ENCODE measurements at regions of chr6 and their contacts with region 1.

Region 1: DNA sequence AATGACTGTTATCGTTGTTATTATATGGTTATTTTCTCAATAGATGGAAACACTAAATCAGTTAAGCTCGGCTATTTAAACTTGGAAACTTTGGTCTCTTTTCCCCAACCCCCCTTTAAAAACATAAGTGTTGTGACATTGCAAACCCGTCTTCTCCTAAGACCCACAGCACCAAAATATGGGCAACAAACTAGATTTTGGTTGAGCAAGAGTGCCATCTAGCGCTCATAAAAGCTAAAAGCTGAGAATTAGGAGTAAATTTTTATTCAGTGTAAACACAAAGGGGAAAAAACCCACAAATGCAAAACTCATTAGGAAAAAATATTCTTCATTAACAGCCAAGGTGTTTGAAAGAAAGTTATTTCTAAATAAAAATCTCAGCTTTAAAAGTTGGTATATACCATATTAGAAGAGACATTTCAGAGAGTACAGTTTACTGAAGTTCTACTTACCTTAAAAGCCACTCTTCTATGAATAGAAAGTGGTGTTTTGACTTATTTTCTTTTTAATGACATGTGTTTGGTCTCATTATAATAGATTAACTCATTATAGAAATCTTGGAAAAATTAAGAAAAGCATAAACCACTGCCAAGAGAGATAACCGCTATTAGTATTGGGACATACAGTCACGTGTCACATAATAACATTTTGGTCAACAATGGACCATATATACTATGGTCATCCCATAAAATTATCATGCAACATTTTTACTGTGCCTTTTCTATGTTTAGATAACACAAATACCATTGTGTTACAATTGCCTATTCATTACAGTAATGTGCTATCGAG is 21.1 kb downstream of the SESN1 start:
- DNase-seq: no peak
- H3K4me3 ChIP-seq: no peak overlapping the region
- H3K27ac ChIP-seq: no peak overlapping the region
- H3K4me1 ChIP-seq: peaks cover 41% of the 10 kb centered on the region
- H3K27me3 ChIP-seq: no peaks in the 10 kb centered on the region
- CTCF ChIP-seq: peak in 2 of 3 experiments; percentile 30 to 77
- POLR2A ChIP-seq: no peak

Region 2: DNA sequence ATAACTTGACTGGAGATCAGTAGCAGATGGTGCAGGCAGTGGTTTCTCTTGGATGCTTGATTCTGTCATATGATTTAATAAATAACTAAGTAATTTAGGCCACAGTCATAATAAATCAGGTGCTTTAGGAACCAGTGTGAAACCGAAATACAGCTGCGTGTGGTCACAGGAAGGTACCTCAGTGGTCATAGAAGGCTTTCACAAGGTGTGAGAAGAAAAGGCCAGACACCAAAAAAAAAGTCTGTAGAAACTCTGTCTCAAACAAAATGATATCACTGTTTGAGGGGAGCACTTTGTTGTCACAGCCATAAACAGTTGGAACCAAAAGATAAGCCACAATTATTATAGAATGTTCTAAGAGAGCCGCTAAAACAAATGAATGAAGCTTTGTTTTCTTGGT is 168.8 kb before region 1 on chr6:
- intact Hi-C with region 1: loop called (anchors 10 kb)
- DNase-seq: no peak
- H3K4me3 ChIP-seq: no peak overlapping the region
- H3K27ac ChIP-seq: no peak overlapping the region
- H3K4me1 ChIP-seq: no peaks in the 10 kb centered on the region
- H3K27me3 ChIP-seq: no peaks in the 10 kb centered on the region
- CTCF ChIP-seq: no peak
- POLR2A ChIP-seq: no peak

Measured in vagina (tissue), 2 donors.